Gastrocnemius medialis (tissue), 4 donors: ENCODE measurements at regions of chr10 and their contacts with region 1.

Region 1: DNA sequence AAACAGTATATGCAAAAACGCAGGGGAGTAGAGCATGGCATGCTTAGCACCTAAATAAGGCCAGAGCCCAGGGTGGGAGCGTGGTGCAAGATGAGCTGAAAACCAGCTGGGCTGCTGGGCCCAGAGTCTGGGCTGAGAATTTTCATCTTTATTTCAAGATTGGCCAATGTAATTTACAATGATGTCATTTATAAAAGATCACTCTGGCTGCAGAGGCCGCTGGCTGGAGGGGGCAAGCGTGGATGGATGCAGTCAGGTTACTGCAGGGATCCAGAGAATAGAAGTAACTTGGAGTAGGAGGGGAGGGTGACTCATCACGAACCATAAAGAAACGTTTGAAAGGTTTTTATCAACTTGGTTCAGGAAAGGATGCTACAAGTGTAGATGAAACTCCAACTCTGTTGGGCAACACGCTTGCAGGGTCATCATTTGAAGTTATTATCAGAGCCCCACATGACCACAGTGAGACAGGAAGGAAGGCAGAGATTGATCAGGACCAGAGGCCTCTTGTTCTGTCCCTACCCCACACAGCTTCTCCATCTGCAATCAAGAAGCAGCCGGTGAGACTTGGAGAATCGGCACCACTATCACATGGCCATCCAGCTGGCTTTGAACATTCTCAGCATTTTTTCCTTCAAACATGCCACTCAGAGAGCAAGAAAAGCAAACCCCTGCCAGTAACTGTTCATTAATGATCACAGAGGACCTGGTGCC is 49.2 kb downstream of the ODAD2 start:
- DNase-seq: no peak
- ATAC-seq: no peak
- H3K4me3 ChIP-seq: no peak overlapping the region
- H3K27ac ChIP-seq: no peak overlapping the region
- H3K4me1 ChIP-seq: no peaks in the 10 kb centered on the region
- H3K27me3 ChIP-seq: no peaks in the 10 kb centered on the region
- CTCF ChIP-seq: no peak
- POLR2A ChIP-seq: no peak

Region 2: DNA sequence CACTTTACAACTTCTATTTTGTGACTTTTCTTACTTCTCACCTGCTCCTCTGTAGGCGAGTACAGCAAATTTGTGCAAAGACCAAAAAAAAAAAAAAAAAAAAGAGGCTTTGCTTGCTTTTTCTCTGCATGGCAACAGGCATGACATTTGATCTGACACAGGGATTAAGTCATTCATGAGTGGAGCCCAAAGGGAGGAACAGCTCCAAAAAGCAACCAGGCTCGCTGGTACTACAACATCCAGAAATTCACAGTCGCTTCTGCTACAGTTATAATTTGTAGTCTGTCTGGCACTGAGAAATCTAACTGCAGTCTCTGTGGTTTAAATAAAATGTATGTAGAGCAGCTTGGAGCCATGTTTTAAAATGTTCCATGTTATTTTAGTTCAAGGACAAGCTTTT is 235.8 kb before region 1 on chr10:
- in situ Hi-C with region 1: no loop called
- intact Hi-C with region 1: no loop called
- DNase-seq: peak in 1 of 2 donors; percentile 16
- ATAC-seq: peak; percentile 51 to 81
- H3K4me3 ChIP-seq: peak overlapping the region in 3 of 4 donors; percentile 6 to 31 (median 28)
- H3K27ac ChIP-seq: no peak overlapping the region
- H3K4me1 ChIP-seq: peaks cover 12 to 27% of the 10 kb centered on the region in 2 donors
- H3K27me3 ChIP-seq: no peaks in the 10 kb centered on the region
- CTCF ChIP-seq: no peak
- POLR2A ChIP-seq: no peak

Region 3: DNA sequence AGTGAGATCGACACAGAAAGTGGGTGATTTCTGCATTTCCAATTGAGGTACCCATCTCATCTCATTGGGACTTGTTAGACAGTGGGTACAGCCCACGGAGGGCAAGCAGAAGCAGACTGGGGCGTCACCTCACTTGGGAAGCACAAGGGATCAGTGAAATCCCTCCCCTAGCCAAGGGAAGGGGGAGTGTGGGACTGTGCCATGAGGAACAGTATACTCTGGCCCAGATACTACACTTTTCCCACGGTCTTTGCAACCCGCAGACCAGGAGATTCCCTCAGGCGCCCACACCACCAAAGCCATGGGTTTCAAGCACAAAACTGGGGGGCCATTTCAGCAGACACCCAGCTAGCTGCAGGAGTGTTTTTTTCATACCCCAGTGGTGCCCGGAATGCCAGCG is 50.6 kb before region 1 on chr10:
- in situ Hi-C with region 1: no loop called
- intact Hi-C with region 1: loop called (anchors 5 kb)
- DNase-seq: no peak
- ATAC-seq: no peak
- H3K4me3 ChIP-seq: no peak overlapping the region
- H3K27ac ChIP-seq: no peak overlapping the region
- H3K4me1 ChIP-seq: no peaks in the 10 kb centered on the region
- H3K27me3 ChIP-seq: no peaks in the 10 kb centered on the region
- CTCF ChIP-seq: no peak
- POLR2A ChIP-seq: no peak